ENCODE measurements at regions of chr15 and their contacts with region 1.

Region 1: GRCh38 chr15:69869881-69870505 is 227.7 kb downstream of the TLE3 start:
- DNase-seq: no peak

Region 2: GRCh38 chr15:69810431-69811354 is 59.3 kb before region 1 on chr15:
- in situ Hi-C with region 1: loop called (anchors 10 kb)
- DNase-seq: no peak

Region 3: GRCh38 chr15:69973102-69973712 is 103.2 kb after region 1 on chr15:
- in situ Hi-C with region 1: no loop called
- DNase-seq: peak; percentile 48

Measured in KBM-7 (cell line).